Activated naive CD4-positive, alpha-beta T cell treated with anti-CD3 and anti-CD28 coated beads for 36 hours (primary cell): ENCODE measurements at regions of chr6 and their contacts with region 1.

Region 1: GRCh38 chr6:11460001-11460668 is 77.4 kb upstream of the TMEM170B start:
- DNase-seq: peak; percentile 22
- H3K4me3 Mint-ChIP-seq: peak overlapping the region; percentile 61
- H3K27ac Mint-ChIP-seq: peak overlapping the region; percentile 97
- H3K4me1 Mint-ChIP-seq: peaks cover 40% of the 10 kb centered on the region
- H3K27me3 Mint-ChIP-seq: peaks cover 2% of the 10 kb centered on the region

Region 2: DNA sequence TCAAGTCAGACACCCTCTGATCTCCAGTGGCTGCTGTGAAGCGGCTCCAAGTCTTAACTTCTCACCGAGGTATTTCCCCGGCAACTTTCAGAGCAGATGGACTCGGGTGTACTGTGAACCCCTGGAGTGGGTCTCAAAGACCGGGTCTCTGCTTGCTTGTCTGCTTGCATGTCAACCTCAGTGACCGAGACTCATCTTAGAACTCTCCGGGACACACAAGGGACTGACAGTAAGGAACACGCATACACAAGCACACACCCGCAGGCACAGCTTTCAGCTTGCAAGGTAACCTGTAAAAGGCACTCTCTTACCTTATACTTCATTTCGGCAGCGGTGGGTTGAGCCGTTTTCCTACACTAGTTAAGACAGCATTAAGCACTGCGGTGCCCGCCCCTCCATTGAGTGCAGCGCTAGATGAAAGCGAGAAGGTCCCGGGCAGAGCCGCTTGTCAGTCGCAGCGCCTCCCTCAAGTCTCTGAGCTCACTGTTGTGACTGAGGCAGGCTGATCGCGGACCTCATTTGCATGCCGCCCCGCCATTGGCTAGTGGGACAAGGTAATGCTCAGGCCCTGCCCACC is 227.9 kb before region 1 on chr6 and contains the start of gene NEDD9:
- CTCF ChIA-PET with region 1: no interaction called
- intact Hi-C with region 1: loop called (anchors 1 kb)
- DNase-seq: peak; percentile 98
- H3K4me3 Mint-ChIP-seq: peak within 1 kb of the TSS; percentile 87
- H3K27ac Mint-ChIP-seq: peak within 1 kb of the TSS; percentile 97
- H3K4me1 Mint-ChIP-seq: peaks cover 48% of the 10 kb centered on the region
- H3K27me3 Mint-ChIP-seq: peaks cover 2% of the 10 kb centered on the region
- total RNA-seq, gene NEDD9: 17.5 to 18.8 TPM

Region 3: DNA sequence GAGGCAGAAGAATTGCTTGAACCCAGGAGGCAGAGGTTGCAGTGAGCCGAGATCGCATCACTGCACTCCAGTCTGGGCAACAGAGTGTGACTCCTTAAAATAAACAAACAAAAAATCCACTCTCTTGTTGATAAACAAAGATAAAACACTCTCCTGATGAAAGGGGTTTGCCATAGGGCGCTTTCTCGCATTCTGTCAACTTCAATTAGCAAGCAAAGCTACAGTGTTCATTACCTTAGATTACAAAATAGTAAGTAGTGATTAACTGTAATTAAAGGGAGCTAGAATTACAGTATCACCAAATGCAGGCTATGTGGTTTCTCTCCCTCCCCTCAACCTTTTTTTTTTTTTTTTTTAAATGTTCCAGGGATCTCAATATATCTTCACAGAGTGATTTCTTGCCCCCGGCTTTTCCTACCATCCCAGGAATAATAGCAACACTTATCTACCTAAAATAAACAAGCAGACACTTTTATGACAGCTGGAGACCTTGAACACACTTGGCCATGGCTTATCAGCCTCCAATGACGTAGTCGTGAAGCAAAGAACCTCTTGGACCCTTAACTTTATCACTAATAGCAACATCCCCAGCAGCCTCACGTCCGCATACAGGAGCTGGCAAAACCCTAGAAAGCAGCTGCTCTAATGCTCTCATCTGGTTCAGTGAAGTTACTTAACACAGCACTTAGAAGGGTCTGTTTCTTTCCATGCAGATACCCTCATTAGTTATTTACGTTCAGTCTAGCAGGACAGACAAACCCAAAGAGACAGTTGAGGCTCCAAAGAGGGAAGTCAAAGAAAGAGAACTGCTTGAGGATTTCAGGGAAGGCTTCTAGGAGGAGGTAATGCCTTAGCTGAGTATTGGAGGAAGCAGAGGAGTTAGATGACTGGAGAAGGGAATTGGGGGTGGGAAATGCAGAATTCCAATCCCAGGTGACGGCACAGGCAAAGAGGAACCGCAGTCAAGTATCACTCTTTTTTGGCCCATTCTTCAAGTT is 189.8 kb before region 1 on chr6:
- CTCF ChIA-PET with region 1: no interaction called
- intact Hi-C with region 1: no loop called
- DNase-seq: no peak
- H3K4me3 Mint-ChIP-seq: no peak overlapping the region
- H3K27ac Mint-ChIP-seq: no peak overlapping the region
- H3K4me1 Mint-ChIP-seq: peaks cover 5% of the 10 kb centered on the region
- H3K27me3 Mint-ChIP-seq: no peaks in the 10 kb centered on the region

Region 4: GRCh38 chr6:11324453-11325015 is 135.6 kb before region 1 on chr6:
- CTCF ChIA-PET with region 1: no interaction called
- intact Hi-C with region 1: loop called (anchors 1 kb)
- DNase-seq: peak; percentile 70
- H3K4me3 Mint-ChIP-seq: peak overlapping the region; percentile 16
- H3K27ac Mint-ChIP-seq: peak overlapping the region; percentile 80
- H3K4me1 Mint-ChIP-seq: peaks cover 42% of the 10 kb centered on the region
- H3K27me3 Mint-ChIP-seq: no peaks in the 10 kb centered on the region

Region 5: DNA sequence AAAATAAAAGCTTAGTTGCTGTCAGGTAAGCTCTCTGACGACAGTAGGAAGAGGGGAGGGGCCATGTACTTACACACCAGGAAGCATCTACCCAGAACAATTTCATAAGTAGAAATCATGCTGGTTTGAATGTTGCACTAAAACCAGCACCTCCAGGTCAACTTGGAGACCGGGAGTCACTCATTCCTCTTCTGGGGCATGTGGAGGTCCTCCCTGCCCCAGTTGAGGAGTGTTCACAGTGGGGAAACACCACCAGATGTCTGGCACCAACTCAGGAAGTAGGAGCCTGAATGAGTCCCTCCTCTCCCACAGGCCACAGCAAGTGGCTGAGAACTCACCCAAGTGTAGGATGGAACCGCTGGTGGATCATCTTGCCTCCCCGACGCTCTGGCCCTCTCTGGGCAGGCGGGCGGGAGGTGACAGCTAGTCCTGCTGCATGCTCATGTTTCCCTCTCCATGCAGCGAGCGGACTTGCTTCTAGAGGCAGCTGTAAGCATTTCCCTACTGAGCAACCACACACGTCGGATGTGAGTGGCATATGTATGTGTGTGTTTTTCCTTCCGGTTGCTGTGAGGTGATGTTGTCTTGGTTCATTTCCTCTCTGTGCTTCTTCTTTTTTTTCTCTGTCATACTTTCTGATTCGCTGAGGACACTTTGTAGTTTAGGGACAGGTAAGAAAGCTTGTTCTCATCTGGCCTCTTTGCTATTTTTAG is 78.2 kb before region 1 on chr6:
- CTCF ChIA-PET with region 1: interaction called, 15 read pairs
- intact Hi-C with region 1: loop called (anchors 1 kb)
- DNase-seq: peak; percentile 83
- H3K4me3 Mint-ChIP-seq: peak overlapping the region; percentile 86
- H3K27ac Mint-ChIP-seq: peak overlapping the region; percentile 91
- H3K4me1 Mint-ChIP-seq: peaks cover 57% of the 10 kb centered on the region
- H3K27me3 Mint-ChIP-seq: no peaks in the 10 kb centered on the region

Region 6: GRCh38 chr6:11445146-11445545 is 15.0 kb before region 1 on chr6:
- CTCF ChIA-PET with region 1: interaction called, 3 read pairs
- intact Hi-C with region 1: loop called (anchors 1 kb)
- DNase-seq: no peak
- H3K4me3 Mint-ChIP-seq: no peak overlapping the region
- H3K27ac Mint-ChIP-seq: no peak overlapping the region
- H3K4me1 Mint-ChIP-seq: peaks cover 53% of the 10 kb centered on the region
- H3K27me3 Mint-ChIP-seq: no peaks in the 10 kb centered on the region

Region 7: GRCh38 chr6:11732036-11732631 is 272.0 kb after region 1 on chr6:
- CTCF ChIA-PET with region 1: no interaction called
- intact Hi-C with region 1: loop called (anchors 5 kb)
- DNase-seq: peak; percentile 87
- H3K4me3 Mint-ChIP-seq: peak overlapping the region; percentile 3
- H3K27ac Mint-ChIP-seq: peak overlapping the region; percentile 92
- H3K4me1 Mint-ChIP-seq: peaks cover 63% of the 10 kb centered on the region
- H3K27me3 Mint-ChIP-seq: no peaks in the 10 kb centered on the region